MCF 10A (cell line): ENCODE measurements at regions of chr1 and their contacts with region 1.

Region 1: DNA sequence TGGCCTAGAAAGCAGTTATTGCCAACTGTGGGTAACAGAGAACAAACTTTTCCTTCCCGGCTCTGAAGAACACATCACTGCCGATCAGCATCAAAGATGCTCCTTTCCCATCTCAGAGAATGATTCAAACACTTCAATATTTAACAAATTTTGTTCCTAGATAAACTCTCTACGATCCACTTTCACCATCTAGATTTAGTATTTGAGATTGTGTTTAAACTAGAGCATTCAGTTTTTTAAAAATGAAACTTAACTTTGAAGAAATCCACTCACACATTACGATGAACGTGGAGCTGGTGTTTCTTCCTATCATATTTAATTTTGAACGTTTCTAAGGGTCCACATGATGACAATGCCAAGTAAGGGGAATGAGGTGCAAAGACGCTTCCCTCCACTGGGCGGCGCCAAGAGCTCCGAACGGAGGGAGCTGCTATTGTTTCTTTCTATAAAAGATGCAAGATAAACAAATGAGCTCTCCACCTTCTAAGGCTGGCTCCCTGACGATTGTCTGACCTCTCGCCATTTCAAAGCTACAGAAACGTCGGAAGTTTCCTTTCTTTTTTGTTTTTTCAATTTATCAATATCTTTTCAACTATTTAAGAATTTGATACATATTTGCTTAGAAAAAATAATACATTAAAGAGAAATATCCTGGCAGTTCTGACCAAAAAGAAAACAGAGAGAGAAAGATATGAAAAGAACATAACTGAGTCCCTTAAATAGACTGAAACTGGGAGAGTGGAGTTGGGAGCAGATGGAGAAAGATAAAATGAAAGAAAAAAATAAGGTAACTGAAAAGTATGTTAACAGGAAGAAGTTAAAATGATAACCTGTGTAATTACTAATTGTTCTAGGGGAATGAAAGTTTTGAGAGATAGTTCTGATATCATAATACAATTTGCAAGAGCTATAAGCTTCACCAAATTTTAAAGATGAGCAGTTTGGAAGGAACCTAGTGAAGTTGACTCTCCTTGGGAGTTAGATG is 4.4 kb upstream of the BARHL2 start:
- DNase-seq: peak; percentile 78
- H3K4me3 Mint-ChIP-seq: peak overlapping the region; percentile 11
- H3K27ac Mint-ChIP-seq: no peak overlapping the region
- H3K4me1 Mint-ChIP-seq: no peaks in the 10 kb centered on the region
- H3K27me3 Mint-ChIP-seq: peaks cover 3% of the 10 kb centered on the region
- CTCF ChIP-seq: peak; percentile 79

Region 2: GRCh38 chr1:90114521-90115141 is 606.9 kb before region 1 on chr1:
- CTCF ChIA-PET with region 1: interaction called, 3 read pairs
- POLR2A ChIA-PET with region 1: no interaction called
- intact Hi-C with region 1: loop called (anchors 5 kb)
- DNase-seq: peak; percentile 67
- H3K4me3 Mint-ChIP-seq: no peak overlapping the region
- H3K27ac Mint-ChIP-seq: no peak overlapping the region
- H3K4me1 Mint-ChIP-seq: no peaks in the 10 kb centered on the region
- H3K27me3 Mint-ChIP-seq: peaks cover 50% of the 10 kb centered on the region
- CTCF ChIP-seq: peak; percentile 62

Region 3: DNA sequence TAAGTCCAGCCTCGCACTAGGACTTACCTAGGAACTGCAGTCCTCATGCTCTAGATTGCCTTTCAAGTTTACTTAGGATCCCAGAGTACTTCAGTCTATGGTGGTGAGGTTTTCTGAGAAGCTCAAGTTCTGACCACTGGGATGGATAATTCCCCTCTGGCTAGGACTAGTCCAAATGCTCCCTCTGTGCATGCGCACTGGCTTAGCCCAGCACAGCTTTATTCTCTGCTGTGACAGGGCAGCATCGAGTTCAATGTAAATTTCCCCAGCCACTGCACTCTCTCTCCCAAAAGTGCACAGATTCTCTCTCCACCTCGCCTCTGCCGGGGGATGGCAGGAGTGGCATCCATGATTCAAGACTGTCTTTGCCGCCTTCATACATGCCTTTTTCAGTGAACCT is 485.0 kb before region 1 on chr1:
- CTCF ChIA-PET with region 1: no interaction called
- POLR2A ChIA-PET with region 1: no interaction called
- intact Hi-C with region 1: no loop called
- DNase-seq: no peak
- H3K4me3 Mint-ChIP-seq: no peak overlapping the region
- H3K27ac Mint-ChIP-seq: no peak overlapping the region
- H3K4me1 Mint-ChIP-seq: no peaks in the 10 kb centered on the region
- H3K27me3 Mint-ChIP-seq: no peaks in the 10 kb centered on the region
- CTCF ChIP-seq: no peak

Region 4: DNA sequence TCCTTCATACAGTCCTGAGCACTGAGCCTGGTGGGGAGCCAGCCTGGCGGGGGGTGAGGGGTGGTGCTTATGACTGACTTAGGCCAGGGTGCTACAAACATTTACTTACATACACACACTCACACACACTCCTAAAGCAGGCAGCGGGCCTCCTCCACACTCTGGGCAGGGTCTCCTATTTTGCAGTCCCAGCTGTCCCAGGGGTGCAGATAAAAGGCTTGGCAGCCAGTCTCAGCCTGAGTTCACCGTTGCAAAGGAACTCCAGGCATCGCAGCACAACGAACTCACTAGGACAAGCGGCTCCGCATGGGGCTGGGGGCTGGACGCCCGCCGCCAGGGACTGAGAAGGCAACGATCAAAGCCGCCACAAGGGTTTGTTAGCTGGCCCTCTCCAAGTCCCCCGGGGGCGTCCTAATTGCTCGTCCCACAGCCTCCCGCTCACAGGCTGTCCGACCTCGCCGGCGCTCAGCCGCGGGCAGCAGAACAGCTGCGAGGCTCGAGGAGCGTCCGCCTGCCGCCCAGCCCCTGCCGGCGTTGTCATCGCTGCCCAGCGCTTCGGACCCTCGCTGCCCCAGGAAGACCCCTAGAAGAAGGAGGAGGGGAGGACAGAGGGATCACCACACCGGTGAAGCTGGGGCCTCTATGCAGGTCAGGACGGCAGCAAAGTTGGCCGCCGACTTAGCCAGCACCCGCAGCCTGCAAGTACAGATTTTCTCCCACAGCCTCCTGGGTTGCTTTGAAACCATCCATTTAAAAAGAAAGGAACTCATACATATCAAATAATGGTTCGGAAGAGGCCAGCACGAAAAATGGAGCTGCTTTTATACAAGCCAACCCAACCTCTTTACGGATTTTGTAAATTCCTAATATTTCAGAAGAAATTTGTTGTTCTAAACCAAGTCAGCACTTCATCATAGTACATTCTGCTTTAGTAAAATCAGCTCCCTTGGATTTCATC is 10.6 kb before region 1 on chr1:
- CTCF ChIA-PET with region 1: interaction called, 14 read pairs
- POLR2A ChIA-PET with region 1: no interaction called
- intact Hi-C with region 1: no loop called
- DNase-seq: no peak
- H3K4me3 Mint-ChIP-seq: no peak overlapping the region
- H3K27ac Mint-ChIP-seq: no peak overlapping the region
- H3K4me1 Mint-ChIP-seq: peaks cover 6% of the 10 kb centered on the region
- H3K27me3 Mint-ChIP-seq: peaks cover 92% of the 10 kb centered on the region
- CTCF ChIP-seq: no peak

Region 5: GRCh38 chr1:90856463-90857007 is 135.0 kb after region 1 on chr1:
- CTCF ChIA-PET with region 1: interaction called, 10 read pairs
- POLR2A ChIA-PET with region 1: no interaction called
- intact Hi-C with region 1: no loop called
- DNase-seq: no peak
- H3K4me3 Mint-ChIP-seq: no peak overlapping the region
- H3K27ac Mint-ChIP-seq: no peak overlapping the region
- H3K4me1 Mint-ChIP-seq: no peaks in the 10 kb centered on the region
- H3K27me3 Mint-ChIP-seq: no peaks in the 10 kb centered on the region
- CTCF ChIP-seq: no peak

Region 6: GRCh38 chr1:91021686-91022517 is 300.4 kb after region 1 on chr1 and contains the start of gene ZNF644:
- CTCF ChIA-PET with region 1: no interaction called
- POLR2A ChIA-PET with region 1: no interaction called
- intact Hi-C with region 1: loop called (anchors 5 kb)
- DNase-seq: peak; percentile 96
- H3K4me3 Mint-ChIP-seq: peak within 1 kb of the TSS; percentile 89
- H3K27ac Mint-ChIP-seq: peak within 1 kb of the TSS; percentile 100
- H3K4me1 Mint-ChIP-seq: peaks cover 10% of the 10 kb centered on the region
- H3K27me3 Mint-ChIP-seq: no peaks in the 10 kb centered on the region
- CTCF ChIP-seq: no peak
- total RNA-seq, gene ZNF644: 43.5 and 46.2 TPM in 2 replicates